Heart left ventricle (tissue), 16 donors: ENCODE measurements at regions of chr10 and their contacts with region 1.

Region 1: GRCh38 chr10:122098924-122099323 is 110.0 kb downstream of the TACC2 start:
- DNase-seq: peak in 1 of 5 donors; percentile 46
- ATAC-seq: peak; percentile 31 to 79 (median 40)
- H3K4me3 ChIP-seq: no peak overlapping the region
- H3K27ac ChIP-seq: peak overlapping the region in 6 of 12 donors; percentile 3 to 58 (median 39)
- H3K4me1 ChIP-seq: peaks cover 0 to 42% (median 20%) of the 10 kb centered on the region in 12 donors
- H3K27me3 ChIP-seq: no peaks in the 10 kb centered on the region
- CTCF ChIP-seq: no peak
- POLR2A ChIP-seq: peak in 1 of 2 donors; percentile 14

Region 2: DNA sequence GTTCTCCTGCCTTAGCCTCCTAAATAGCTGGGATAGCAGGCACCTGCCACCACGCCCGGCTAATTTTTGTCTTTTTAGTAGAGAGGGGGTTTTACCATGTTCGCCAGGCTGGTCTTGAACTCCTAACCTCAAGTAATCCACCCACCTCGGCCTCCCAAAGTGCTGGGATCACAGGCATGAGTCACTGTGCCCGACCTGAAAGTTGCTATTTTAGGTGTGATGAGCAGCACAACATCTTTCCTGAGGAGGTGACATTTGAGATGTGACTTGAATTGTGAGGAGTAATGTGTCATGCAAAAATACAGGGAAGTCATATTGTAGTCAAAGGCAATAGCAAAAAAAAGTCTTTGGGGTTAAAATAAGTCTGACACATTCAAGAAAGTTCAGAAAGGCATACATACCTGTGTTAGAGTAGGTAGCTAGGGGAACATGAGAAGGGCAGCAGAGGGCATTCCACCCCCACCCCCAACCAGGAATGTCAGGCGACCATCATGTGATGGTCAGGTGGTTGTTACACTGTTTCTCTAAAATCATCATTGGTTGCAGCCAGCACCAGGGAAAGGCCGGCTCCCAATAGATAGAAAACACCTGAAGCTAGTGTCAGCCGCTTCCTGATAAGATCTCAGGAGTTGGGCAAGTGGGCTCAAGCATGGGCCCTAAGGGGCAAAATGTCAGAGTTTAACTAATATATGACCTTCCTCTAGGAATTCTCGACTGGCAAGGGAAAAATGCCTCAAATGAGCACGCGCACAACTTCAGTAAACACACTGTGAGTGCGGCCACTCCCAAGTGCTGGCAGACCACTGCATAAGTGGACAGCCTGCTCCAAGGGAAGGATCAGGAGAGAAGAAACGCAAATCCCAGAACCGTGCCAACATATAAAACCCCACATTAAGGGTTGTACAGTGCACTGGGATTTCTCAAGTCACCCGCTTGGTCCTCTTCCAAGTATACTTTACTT is 110.3 kb before region 1 on chr10 and contains the start of gene TACC2:
- intact Hi-C with region 1: no loop called
- DNase-seq: no peak
- ATAC-seq: peak in 1 of 4 donors; percentile 66
- H3K4me3 ChIP-seq: no peak within 1 kb of the TSS
- H3K27ac ChIP-seq: peak within 1 kb of the TSS in 8 of 12 donors; percentile 2 to 85 (median 46)
- H3K4me1 ChIP-seq: peaks cover 0 to 16% (median 10%) of the 10 kb centered on the region in 12 donors
- H3K27me3 ChIP-seq: no peaks in the 10 kb centered on the region
- CTCF ChIP-seq: no peak
- POLR2A ChIP-seq: no peak
- total RNA-seq, gene TACC2: 225 to 456 (median 334) TPM

Region 3: GRCh38 chr10:122062831-122063674 is 35.9 kb before region 1 on chr10:
- intact Hi-C with region 1: no loop called
- DNase-seq: peak; percentile 83 to 92 (median 86)
- ATAC-seq: peak; percentile 96 to 99 (median 98)
- H3K4me3 ChIP-seq: no peak overlapping the region
- H3K27ac ChIP-seq: peak overlapping the region; percentile 56 to 95 (median 86)
- H3K4me1 ChIP-seq: peaks cover 6 to 28% (median 17%) of the 10 kb centered on the region in 12 donors
- H3K27me3 ChIP-seq: no peaks in the 10 kb centered on the region
- CTCF ChIP-seq: no peak
- POLR2A ChIP-seq: peak in 1 of 2 donors; percentile 49

Region 4: GRCh38 chr10:122083478-122084257 is 15.3 kb before region 1 on chr10:
- intact Hi-C with region 1: loop called in 1 of 10 experiments (anchors 2 kb)
- DNase-seq: peak in 4 of 5 donors; percentile 65 to 83 (median 72)
- ATAC-seq: peak; percentile 47 to 71 (median 64)
- H3K4me3 ChIP-seq: no peak overlapping the region
- H3K27ac ChIP-seq: peak overlapping the region in 4 of 12 donors; percentile 28 to 65 (median 31)
- H3K4me1 ChIP-seq: peaks cover 3 to 62% (median 22%) of the 10 kb centered on the region in 12 donors
- H3K27me3 ChIP-seq: no peaks in the 10 kb centered on the region
- CTCF ChIP-seq: no peak
- POLR2A ChIP-seq: no peak